Right ventricle myocardium superior (tissue), 1 donor: ENCODE measurements at regions of chr3 and their contacts with region 1.

Region 1: DNA sequence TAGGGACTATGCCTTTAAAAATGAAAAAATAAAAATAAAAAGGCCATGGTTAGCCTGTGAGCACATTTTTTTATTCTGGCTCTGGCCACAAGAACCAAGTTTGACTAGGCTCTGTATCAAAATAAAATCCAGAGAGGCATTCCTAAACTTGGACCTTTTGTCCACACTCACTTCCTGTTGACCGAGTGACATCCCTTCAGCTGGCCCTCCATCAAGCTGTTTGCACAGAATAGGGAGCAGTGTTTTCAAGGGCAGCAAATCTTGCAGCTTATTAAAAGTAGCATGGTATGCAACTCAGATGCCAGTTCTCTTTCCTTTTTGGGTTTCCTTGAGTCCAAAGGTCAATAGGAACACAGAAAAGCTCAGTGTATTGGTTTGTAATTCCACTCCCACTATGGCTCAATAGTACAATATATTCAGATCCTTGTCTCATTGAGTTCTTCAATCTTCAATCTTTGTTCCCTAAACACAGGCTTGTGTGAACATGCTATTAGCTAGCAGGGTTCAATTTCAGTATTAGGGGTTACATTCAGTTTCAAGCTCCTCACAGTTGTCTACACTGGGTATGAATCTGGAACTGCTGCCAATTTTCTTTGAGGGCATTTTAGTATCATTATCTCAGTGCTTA is 244.5 kb downstream of the RBMS3 start:
- DNase-seq: peak; percentile 61
- ATAC-seq: peak; percentile 93

Region 2: GRCh38 chr3:29409409-29409808 is 116.0 kb before region 1 on chr3:
- intact Hi-C with region 1: loop called (anchors 10 kb)
- DNase-seq: no peak
- ATAC-seq: peak; percentile 48

Region 3: DNA sequence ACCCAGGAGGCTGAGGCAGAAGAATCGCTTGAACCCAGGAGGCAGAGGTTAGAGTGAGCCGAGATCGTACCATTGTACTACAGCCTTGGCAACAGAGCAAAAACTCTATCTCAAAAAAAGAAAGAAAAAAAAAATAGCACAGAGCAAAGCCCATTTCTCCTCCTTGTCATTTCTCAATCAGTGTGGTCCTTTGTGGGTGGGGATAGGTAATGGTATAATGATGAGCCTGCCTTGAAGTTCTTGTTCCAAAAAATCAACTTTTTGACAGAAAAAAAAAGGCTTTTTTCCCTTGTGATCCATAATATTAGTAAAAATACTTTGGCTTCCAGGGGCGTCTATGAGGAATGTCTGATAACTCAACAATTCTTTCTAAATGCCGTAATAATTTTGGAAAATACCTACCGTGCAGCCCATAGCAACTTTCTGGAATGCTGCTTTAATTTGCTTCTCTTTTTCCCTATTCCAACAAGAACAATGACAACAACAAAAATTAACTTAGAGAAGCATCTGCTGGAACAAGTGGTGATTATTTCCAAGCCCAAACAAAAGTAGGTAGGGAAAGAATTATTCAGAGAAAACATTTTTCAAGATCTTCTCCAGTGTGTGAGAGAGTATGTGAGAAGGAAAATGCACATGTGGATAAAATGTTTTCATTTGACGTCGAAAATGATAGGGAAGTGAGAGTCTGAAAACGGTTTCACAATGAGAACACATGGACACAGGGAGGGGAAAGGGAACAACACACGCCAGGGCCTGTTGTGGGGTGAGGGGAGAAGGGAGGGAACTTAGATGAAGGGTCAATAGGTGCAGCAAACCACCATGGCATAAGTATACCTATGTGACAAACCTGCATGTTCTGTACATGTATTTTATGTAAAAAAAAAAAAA is 93.3 kb after region 1 on chr3:
- intact Hi-C with region 1: no loop called
- DNase-seq: peak; percentile 27
- ATAC-seq: peak; percentile 82

Region 4: DNA sequence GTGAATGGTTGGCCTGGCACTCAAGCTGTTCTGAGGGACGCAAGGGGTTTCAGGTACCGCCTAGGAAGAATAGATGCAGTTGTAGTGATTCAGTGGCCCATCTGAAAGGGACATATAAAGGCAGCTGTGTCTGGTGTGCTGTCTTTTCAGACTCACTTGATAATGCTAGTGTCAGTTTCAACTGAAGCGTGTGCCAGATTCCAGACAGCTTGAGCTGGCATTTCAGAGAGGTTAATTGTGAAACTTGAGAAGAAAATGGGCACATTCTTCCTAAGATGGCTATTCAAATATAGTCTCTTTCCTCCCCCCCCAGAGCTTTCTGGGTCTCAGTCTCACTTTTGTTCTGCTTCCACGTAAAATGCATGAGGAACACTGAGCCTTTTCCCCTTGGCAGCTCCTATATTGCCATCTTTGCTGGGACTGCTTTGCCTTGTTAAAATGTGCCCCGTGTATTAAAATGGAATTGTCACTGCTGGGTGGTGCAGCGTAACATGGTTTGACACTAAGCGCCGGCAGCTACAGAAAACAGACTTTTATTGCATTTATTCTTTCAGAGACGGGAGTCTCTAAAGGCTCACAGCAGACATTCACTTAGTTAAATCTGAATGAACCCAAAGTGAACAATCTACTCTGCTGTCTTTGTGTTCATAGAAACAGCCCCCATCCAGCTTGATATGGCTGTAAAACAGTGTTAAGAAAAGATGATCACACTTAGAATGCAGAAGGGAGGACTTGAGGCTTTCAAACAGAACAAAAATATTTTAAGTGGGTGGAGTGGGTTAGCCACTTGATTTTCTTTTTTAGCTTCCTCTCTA is 234.2 kb after region 1 on chr3:
- intact Hi-C with region 1: loop called (anchors 10 kb)
- DNase-seq: no peak
- ATAC-seq: peak; percentile 62